Panc1 (cell line): ENCODE measurements at regions of chr12 and their contacts with region 1.

Region 1: DNA sequence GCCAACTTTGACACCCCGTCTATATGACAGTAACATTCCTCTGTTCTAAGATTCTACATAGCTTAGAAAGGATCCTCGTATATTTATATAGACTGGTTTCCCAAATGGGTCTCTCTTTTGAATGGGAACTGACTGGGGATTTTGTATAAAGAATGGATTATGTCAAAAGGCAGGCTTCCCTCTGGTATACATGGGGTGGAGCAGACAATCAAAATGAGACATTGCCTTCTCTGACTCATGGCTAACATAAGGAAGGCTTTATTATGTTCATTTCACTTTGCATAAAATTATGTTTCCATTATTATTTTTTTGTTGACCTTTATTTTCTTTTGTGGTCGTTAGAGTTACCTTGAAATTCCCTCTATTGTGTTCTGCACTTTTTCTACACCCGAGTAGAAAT is 211.1 kb downstream of the ALG10B start:
- DNase-seq: no peak
- ATAC-seq: no peak
- H3K4me3 ChIP-seq: no peak overlapping the region
- H3K27ac ChIP-seq: no peak overlapping the region
- H3K4me1 ChIP-seq: no peaks in the 10 kb centered on the region
- H3K27me3 ChIP-seq: no peaks in the 10 kb centered on the region; the same call in 1 of the 2 replicates
- CTCF ChIP-seq: no peak

Region 2: DNA sequence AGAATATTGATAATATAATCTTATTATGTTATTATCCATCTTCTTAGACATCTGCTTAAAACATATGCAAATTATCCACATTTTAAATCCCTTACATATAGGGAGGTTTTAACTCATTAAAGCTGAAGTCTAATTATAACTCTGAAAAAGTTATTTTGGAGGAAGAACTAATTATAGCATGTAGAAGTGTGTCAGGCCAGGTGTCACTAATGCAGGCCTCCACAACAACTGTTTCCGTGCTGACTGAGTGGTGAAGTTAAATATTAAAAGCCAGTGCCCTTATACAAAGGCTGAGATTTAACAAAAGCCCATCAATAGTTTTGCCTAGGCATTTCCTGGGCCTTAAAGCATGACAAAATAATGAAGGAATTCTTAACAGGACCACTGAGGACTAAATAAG is 1854.6 kb after region 1 on chr12:
- CTCF ChIA-PET with region 1: no interaction called
- POLR2A ChIA-PET with region 1: interaction called, 11 read pairs
- in situ Hi-C with region 1: no loop called
- intact Hi-C with region 1: no loop called
- DNase-seq: no peak
- ATAC-seq: no peak
- H3K4me3 ChIP-seq: no peak overlapping the region
- H3K27ac ChIP-seq: no peak overlapping the region
- H3K4me1 ChIP-seq: no peaks in the 10 kb centered on the region
- H3K27me3 ChIP-seq: no peaks in the 10 kb centered on the region
- CTCF ChIP-seq: no peak